ENCODE measurements at regions of chr19 and their contacts with region 1.

Region 1: DNA sequence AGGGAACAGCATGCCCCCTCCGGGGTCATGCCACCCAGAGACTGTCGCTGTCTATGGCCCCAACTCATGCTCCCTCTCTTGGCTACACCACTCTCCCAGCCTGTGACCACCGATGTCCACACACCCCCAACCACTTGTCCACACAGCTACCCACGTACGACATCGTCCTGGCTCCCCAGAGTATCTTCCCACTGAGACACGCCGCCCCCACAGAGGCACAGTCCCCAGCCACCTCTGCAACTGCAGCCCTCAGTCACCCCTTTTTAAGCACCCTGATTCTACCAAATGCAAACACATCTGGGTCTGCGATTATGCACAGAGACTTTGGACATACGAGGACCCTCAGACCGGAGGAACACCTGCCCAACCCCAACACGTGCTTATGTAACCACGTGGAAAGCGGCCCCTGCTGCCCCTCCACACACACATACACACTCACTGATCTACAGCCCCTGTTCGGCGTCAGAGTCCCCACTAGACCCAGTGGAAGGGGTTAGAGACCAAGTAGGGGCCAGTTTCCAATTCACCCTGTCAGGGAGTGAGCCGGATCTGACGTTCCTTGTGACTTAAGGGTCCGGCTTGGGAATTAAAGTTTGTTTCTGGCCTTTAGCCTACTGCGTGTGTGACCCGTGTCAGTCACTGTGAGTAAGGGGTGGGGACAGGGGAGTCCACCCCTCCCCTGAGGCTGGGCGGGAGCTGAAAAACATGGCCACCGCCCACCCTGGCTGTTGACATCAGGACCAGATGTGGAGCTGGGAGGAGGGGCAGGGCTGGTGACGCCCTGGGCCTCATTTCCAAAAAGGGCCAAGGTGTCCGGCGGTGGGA is 11.9 kb upstream of the AXL start:
- DNase-seq: no peak
- H3K4me3 ChIP-seq: no peak overlapping the region
- H3K27ac ChIP-seq: no peak overlapping the region
- H3K27me3 ChIP-seq: no peaks in the 10 kb centered on the region
- CTCF ChIP-seq: no peak

Region 2: GRCh38 chr19:40570313-40571004 is 636.7 kb before region 1 on chr19:
- CTCF ChIA-PET with region 1: interaction called, 12 read pairs
- POLR2A ChIA-PET with region 1: no interaction called
- DNase-seq: peak; percentile 100
- H3K4me3 ChIP-seq: peak overlapping the region; percentile 77
- H3K27ac ChIP-seq: peak overlapping the region; percentile 89
- H3K27me3 ChIP-seq: peaks cover 8% of the 10 kb centered on the region
- CTCF ChIP-seq: no peak

Region 3: GRCh38 chr19:40962460-40962961 is 244.6 kb before region 1 on chr19:
- CTCF ChIA-PET with region 1: no interaction called
- POLR2A ChIA-PET with region 1: no interaction called
- DNase-seq: no peak
- H3K4me3 ChIP-seq: no peak overlapping the region
- H3K27ac ChIP-seq: no peak overlapping the region
- H3K27me3 ChIP-seq: no peaks in the 10 kb centered on the region
- CTCF ChIP-seq: no peak

Region 4: GRCh38 chr19:41136636-41137455 is 70.3 kb before region 1 on chr19:
- CTCF ChIA-PET with region 1: no interaction called
- POLR2A ChIA-PET with region 1: no interaction called
- DNase-seq: no peak
- H3K4me3 ChIP-seq: no peak overlapping the region
- H3K27ac ChIP-seq: no peak overlapping the region
- H3K27me3 ChIP-seq: peaks cover 13% of the 10 kb centered on the region
- CTCF ChIP-seq: no peak

Region 5: DNA sequence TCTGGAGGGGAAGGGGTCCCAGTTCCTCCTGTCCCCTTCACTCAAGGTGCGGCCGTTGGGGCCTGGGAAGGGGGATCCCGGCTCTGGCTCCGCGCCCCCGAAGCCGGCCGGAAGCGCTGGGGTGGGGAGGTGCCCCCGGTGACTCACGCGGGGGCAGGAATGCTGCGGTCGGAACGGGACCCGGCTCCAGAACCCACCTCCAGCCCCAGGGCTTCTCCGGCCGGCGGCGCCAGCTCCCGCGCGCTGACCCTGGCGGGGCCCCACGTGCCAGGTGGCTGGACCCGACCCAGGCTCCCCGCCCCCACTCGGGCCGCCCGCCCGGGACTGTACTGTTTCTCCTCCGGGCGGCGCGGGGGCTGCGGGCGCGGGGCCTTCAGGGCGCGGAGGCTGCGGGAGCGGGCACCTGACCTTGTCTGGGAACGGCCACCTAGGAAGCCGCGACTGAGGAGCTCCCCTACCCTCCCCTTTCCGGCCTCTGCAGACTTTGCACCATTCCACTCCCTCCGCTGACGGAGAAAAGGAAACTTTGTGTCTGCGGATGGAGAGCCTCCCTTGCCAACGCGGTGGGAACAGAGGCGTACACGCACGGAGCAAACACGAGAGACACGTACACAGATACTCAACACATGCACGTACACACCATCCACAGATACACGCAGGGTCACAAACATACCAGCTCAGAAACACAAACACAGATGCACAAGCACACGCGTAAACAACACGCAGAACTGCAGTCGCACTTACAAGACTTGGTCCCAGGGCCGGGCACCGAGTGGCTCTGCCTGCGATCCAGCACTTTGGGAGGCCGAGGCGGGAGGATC is 19.1 kb after region 1 on chr19:
- CTCF ChIA-PET with region 1: interaction called, 7 read pairs
- POLR2A ChIA-PET with region 1: interaction called, 10 read pairs
- DNase-seq: peak; percentile 85
- H3K4me3 ChIP-seq: peak overlapping the region; percentile 52
- H3K27ac ChIP-seq: peak overlapping the region; percentile 97
- H3K27me3 ChIP-seq: no peaks in the 10 kb centered on the region
- CTCF ChIP-seq: no peak

Region 6: DNA sequence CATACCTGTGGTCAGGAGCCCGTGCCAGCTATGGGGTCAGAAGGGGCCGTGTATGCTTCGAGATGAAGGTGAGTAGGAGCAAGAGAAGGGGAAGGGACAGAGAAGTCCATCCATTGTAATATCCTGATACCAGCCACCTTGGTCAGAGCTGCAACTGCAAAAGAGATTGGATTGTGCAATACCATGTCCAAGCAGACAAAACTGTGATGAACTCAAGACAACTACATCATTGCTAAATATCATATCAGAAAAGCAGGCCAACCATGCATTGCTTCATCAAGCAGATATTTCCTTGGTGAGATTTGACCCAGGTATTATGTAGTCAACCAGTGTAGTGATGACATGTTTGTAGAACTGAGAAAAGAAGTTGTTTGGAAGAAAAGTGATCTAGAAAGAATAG is 69.1 kb after region 1 on chr19:
- CTCF ChIA-PET with region 1: interaction called, 11 read pairs
- POLR2A ChIA-PET with region 1: no interaction called
- DNase-seq: no peak
- H3K4me3 ChIP-seq: no peak overlapping the region
- H3K27ac ChIP-seq: no peak overlapping the region
- H3K27me3 ChIP-seq: no peaks in the 10 kb centered on the region
- CTCF ChIP-seq: no peak

Region 7: GRCh38 chr19:41321600-41322270 is 114.6 kb after region 1 on chr19:
- CTCF ChIA-PET with region 1: interaction called, 11 read pairs
- POLR2A ChIA-PET with region 1: no interaction called
- DNase-seq: no peak
- H3K4me3 ChIP-seq: no peak overlapping the region
- H3K27ac ChIP-seq: peak overlapping the region; percentile 100
- H3K27me3 ChIP-seq: no peaks in the 10 kb centered on the region
- CTCF ChIP-seq: peak; percentile 84

Measured in AG04450 (cell line).